IMR-90 (cell line): ENCODE measurements at regions of chr15 and their contacts with region 1.

Region 1: DNA sequence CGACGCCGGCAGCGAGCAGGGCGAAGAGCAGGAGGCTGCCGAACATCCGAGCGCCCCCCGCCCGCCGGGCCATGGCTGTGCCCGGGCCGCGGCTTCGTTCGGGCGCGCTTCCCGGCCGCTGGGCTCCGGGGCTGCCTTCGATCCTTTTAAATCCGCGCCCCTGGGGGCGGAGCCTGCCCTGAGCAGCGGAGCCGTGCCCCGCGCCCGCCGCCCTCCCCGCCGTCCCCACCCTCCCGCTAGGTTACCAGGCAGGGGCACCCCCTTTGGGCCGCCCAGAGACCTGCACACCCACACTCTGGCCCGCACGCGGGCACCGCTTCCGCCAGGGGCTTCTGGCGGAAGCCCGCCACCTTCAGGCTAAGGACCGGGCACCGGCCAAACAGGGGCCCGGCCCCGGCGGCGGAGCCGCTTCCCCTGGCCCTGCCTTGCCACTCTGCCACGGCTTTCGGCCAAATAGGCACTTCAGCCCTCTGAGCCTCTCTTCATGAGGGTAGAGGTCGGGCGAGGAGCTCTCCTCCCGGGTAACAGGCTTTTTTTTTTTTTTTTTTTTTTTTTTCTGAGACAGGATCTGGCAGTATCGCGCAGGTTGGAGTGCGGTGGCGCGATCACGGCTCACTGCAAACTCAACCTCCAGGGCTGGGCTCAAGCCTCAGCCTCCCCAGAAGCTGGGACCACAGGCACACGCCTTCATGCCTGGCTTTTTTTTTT is at the start of gene NMB:
- DNase-seq: peak; percentile 63
- ATAC-seq: peak; percentile 63
- H3K4me3 ChIP-seq: peak within 1 kb of the TSS; percentile 62
- H3K27ac ChIP-seq: peak within 1 kb of the TSS; percentile 26; the same call in 1 of the 2 replicates
- H3K4me1 ChIP-seq: peaks cover 9% of the 10 kb centered on the region
- H3K27me3 ChIP-seq: no peaks in the 10 kb centered on the region
- CTCF ChIP-seq: peak; percentile 64
- POLR2A ChIP-seq: no peak
- RAD21 ChIP-seq: peak; percentile 21; the same call in 1 of the 2 replicates
- total RNA-seq, gene NMB: 1.3 and 1.4 TPM in 2 replicates

Region 2: GRCh38 chr15:84600851-84601838 is 57.1 kb before region 1 on chr15 and contains the start of gene ZSCAN2:
- CTCF ChIA-PET with region 1: no interaction called
- POLR2A ChIA-PET with region 1: no interaction called
- dilution Hi-C with region 1: no loop called
- in situ Hi-C with region 1: no loop called
- intact Hi-C with region 1: loop called (anchors 5 kb)
- DNase-seq: peak; percentile 91
- ATAC-seq: peak; percentile 98
- H3K4me3 ChIP-seq: peak within 1 kb of the TSS; percentile 65
- H3K27ac ChIP-seq: peak within 1 kb of the TSS; percentile 70
- H3K4me1 ChIP-seq: peaks cover 4% of the 10 kb centered on the region
- H3K27me3 ChIP-seq: no peaks in the 10 kb centered on the region
- CTCF ChIP-seq: no peak
- POLR2A ChIP-seq: no peak
- RAD21 ChIP-seq: no peak
- total RNA-seq, gene ZSCAN2: 15.0 and 18.3 TPM in 2 replicates

Region 3: GRCh38 chr15:84748274-84749110 is 90.3 kb after region 1 on chr15 and contains the start of gene ZNF592:
- CTCF ChIA-PET with region 1: no interaction called
- POLR2A ChIA-PET with region 1: no interaction called
- dilution Hi-C with region 1: no loop called
- in situ Hi-C with region 1: no loop called
- intact Hi-C with region 1: loop called (anchors 1 kb)
- DNase-seq: peak; percentile 70
- ATAC-seq: peak; percentile 85
- H3K4me3 ChIP-seq: peak within 1 kb of the TSS; percentile 99
- H3K27ac ChIP-seq: peak within 1 kb of the TSS; percentile 92
- H3K4me1 ChIP-seq: peaks cover 12% of the 10 kb centered on the region
- H3K27me3 ChIP-seq: no peaks in the 10 kb centered on the region
- CTCF ChIP-seq: peak; percentile 33
- POLR2A ChIP-seq: no peak
- RAD21 ChIP-seq: peak; percentile 22; the same call in 1 of the 2 replicates
- total RNA-seq, gene ZNF592: 4.2 and 4.3 TPM in 2 replicates

Region 4: GRCh38 chr15:84929744-84930371 is 271.6 kb after region 1 on chr15:
- CTCF ChIA-PET with region 1: no interaction called
- POLR2A ChIA-PET with region 1: no interaction called
- dilution Hi-C with region 1: no loop called
- in situ Hi-C with region 1: no loop called
- intact Hi-C with region 1: loop called (anchors 1 kb)
- DNase-seq: peak; percentile 72
- ATAC-seq: no peak
- H3K4me3 ChIP-seq: no peak overlapping the region
- H3K27ac ChIP-seq: no peak overlapping the region
- H3K4me1 ChIP-seq: peaks cover 2% of the 10 kb centered on the region
- H3K27me3 ChIP-seq: no peaks in the 10 kb centered on the region
- CTCF ChIP-seq: no peak
- POLR2A ChIP-seq: no peak
- RAD21 ChIP-seq: no peak